ENCODE measurements at regions of chr20 and their contacts with region 1.

Region 1: DNA sequence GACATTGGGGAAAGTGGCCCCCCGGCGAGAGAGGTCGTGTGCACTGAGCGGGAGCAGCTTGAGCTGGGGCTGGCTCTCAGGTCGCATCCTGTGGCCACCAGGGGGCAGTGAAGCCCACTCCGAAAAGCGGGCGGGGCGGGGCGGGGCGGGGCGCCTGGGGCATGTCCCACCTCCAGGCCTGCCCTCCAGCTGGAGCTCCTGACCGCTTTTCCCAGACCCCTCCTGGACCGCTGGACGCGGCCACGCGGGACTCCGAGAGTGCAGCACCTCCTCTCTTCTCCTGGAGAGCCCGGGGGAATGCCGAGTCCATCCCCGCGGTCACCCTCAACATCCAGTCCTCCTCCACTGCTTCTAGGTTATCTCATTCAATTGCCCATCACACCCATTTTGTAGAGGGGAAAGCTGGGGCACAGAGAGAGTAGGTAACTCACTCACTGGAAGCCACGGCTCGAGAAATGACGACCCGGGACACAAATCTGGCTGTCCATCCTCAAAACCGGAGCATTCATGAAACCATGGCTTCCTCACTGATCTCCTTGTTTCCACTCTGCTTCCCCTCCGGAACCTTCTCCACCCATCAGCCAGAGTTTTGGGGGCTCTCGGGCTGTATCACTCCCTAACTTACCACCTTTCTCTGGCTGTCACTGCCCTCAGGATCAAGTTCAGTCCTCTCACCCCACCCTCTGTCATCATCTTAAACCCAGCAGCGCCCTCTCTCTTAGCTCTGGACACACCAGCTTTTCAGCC is 24.1 kb downstream of the COX4I2 start:
- DNase-seq: peak; percentile 70 to 81 (median 73)
- H3K4me3 ChIP-seq: peak overlapping the region in 1 of 2 donors; percentile 70
- H3K4me3 Mint-ChIP-seq: peak overlapping the region; percentile 83 to 93 (median 84)
- H3K27ac ChIP-seq: peak overlapping the region; percentile 59
- H3K27ac Mint-ChIP-seq: peak overlapping the region; percentile 57 to 95 (median 89)
- H3K4me1 ChIP-seq: peaks cover 31% of the 10 kb centered on the region
- H3K4me1 Mint-ChIP-seq: peaks cover 21 to 43% (median 29%) of the 10 kb centered on the region in 4 donors
- H3K27me3 ChIP-seq: no peaks in the 10 kb centered on the region
- H3K27me3 Mint-ChIP-seq: no peaks in the 10 kb centered on the region

Region 2: DNA sequence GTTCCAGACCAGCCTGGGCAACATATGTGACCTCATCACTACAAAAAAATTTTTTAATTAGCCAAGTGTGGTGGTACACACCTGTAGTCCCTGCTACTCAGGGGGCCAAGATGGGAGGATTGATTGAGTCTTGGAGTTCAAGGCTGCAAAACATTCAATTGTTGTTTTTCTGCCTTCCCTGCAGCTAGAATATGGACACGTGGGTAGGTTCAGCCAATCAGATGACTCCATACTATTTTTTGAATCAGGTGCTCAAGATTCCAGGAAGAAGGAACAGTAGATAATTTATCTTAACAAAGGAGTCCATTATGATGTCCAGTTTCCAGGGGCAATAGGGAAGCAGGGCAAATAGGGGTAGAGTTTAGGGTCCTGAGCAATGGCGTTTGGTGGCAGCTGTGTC is 269.0 kb before region 1 on chr20:
- CTCF ChIA-PET with region 1: no interaction called
- POLR2A ChIA-PET with region 1: no interaction called
- intact Hi-C with region 1: no loop called
- DNase-seq: no peak
- H3K4me3 ChIP-seq: no peak overlapping the region
- H3K4me3 Mint-ChIP-seq: no peak overlapping the region
- H3K27ac ChIP-seq: no peak overlapping the region
- H3K27ac Mint-ChIP-seq: no peak overlapping the region
- H3K4me1 ChIP-seq: no peaks in the 10 kb centered on the region
- H3K4me1 Mint-ChIP-seq: no peaks in the 10 kb centered on the region
- H3K27me3 ChIP-seq: no peaks in the 10 kb centered on the region
- H3K27me3 Mint-ChIP-seq: peaks cover 6 to 20% of the 10 kb centered on the region in 2 donors

Region 3: DNA sequence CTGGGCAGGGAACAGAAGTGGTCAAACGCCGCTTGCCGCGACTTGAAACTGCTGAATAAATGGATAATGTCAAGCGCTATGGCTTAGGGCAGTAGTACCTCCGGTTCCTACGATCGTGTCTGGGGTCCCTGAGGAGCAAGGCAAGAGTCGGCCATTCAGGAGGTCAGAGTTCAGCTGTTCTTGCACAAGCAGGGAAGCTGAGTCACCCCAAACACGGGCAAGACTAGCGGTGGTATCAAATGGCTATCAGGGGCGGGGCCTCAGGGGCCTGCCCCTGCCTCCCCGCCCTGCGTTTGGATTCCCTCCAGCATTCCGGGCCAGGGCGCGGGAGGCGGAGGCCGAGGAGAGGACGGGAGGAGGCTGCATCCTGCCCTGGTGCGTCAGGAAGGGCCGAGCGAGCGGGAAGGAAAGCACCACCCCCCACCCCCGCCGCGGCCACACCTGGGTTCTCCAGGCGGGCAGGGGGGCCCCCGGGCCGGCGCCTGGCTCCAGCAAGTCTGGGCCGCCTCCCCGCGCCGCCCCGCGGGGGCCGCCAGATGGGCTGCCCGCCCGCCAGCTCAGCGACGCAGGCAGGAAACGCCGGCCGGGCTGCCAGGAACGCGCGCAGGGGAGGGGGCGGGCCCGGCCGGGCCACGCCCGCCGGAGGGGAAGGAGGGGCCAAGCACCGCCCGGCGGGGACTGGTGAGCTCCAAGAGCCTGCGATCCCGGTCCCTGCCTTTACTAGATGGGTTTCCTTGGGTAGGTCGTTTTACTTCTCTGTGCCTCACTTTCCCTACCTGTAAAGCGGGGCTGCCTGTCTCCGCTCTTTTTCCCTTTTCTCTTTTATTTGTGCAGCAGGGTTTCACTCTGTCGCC is 88.9 kb before region 1 on chr20:
- CTCF ChIA-PET with region 1: interaction called, 12 read pairs
- POLR2A ChIA-PET with region 1: no interaction called
- intact Hi-C with region 1: no loop called
- DNase-seq: peak; percentile 73 to 85 (median 79)
- H3K4me3 ChIP-seq: peak overlapping the region; percentile 61 to 71
- H3K4me3 Mint-ChIP-seq: peak overlapping the region; percentile 87 to 95 (median 88)
- H3K27ac ChIP-seq: peak overlapping the region; percentile 71
- H3K27ac Mint-ChIP-seq: peak overlapping the region; percentile 86 to 96 (median 90)
- H3K4me1 ChIP-seq: peaks cover 14% of the 10 kb centered on the region
- H3K4me1 Mint-ChIP-seq: peaks cover 14 to 29% (median 19%) of the 10 kb centered on the region in 4 donors
- H3K27me3 ChIP-seq: no peaks in the 10 kb centered on the region
- H3K27me3 Mint-ChIP-seq: no peaks in the 10 kb centered on the region

Region 4: DNA sequence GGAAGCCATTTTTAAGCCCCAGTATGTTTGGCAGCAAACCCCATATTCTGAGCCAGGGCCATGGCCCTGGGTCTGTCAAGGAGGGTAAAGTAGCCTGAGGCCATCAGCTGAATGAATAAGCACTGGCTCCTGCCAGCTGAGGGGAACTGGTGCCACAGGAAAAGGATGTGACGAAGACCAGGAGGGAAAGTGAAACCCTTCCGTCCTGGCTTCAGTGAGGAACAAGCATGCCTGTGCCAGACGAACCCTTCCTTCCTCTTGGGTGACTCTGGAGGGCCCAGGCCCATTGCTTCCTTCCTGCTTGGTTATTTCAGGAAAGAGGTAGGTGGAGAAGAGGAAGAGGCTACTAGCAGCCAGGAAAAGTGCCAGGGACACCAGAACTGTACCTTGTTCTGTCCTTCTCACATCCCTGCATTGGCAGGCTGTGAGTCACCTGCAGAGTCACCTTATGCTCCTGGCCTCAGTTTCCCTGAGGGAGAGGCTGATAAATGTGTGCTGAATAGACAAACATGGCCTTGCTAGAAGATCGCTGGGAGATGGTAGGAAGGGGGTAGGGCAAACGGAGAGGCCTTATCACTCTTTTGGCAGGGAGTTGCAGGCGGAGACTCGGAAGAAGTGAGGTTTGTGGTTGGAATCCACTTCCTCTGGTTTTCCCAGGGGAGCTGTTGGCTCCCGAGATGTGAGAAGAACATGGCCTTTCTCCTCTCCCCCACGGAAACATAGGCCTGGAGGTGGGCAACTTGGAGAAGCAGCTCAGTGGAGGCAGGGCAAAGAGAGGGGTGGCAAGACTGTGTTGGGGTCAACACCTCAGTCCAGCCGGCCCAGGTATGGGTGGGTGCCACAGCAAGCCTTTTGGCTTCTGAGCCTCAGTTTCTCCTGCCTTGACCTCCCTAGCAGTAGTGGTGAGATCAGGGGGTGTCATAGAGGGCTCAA is 13.4 kb after region 1 on chr20:
- CTCF ChIA-PET with region 1: interaction called, 87 read pairs
- POLR2A ChIA-PET with region 1: interaction called, 22 read pairs
- intact Hi-C with region 1: loop called (anchors 1 kb)
- DNase-seq: peak; percentile 61 to 84 (median 63)
- H3K4me3 ChIP-seq: peak overlapping the region; percentile 59 to 87
- H3K4me3 Mint-ChIP-seq: peak overlapping the region; percentile 91 to 97 (median 94)
- H3K27ac ChIP-seq: peak overlapping the region; percentile 75
- H3K27ac Mint-ChIP-seq: peak overlapping the region; percentile 96 to 98 (median 97)
- H3K4me1 ChIP-seq: peaks cover 88% of the 10 kb centered on the region
- H3K4me1 Mint-ChIP-seq: peaks cover 59 to 82% (median 70%) of the 10 kb centered on the region in 4 donors
- H3K27me3 ChIP-seq: no peaks in the 10 kb centered on the region
- H3K27me3 Mint-ChIP-seq: no peaks in the 10 kb centered on the region

Region 5: DNA sequence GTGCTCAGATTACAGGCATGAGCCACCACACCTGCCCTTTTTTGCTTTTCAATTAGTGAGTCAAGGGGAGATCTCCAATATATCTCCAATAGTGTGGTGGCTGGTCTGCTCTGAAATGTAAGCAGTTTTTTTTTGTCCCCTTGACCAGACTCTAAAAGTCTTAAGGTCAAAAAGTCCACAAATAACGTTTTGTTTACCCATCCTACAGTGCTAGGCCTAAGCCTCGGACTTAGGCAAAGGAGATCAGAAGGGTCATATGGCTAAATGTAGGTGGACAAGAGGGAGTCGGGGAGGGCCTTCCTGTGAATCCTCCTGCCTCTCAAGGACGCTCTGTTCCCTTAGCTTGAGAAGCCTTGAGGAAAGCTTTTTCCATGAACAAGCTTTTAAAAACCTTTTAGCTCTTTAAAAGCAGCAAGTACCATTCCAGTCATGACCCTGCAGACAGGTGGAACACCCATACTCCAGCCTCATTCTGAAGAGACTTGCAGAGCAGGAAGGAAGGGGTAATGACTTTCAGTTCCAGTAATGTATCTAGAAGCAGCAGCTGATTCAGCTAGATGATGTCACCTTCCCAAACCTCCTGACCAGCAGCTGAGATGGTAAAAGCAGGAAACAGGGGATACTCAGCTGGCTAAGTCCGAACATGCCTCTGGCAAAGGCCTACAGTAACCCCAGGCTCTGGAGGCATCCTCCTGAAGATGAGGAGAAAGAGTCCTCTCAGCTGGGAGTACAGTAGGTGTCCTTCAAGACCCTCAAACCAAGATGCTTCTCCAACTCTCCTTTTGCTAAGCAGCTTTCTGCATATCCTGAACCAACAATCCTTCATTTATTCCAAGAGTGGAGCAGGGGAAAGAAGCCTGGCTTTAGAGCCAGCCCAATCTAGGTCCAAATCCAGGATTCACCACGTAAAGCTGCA is 37.3 kb after region 1 on chr20:
- CTCF ChIA-PET with region 1: interaction called, 23 read pairs
- POLR2A ChIA-PET with region 1: no interaction called
- intact Hi-C with region 1: no loop called
- DNase-seq: no peak
- H3K4me3 ChIP-seq: no peak overlapping the region
- H3K4me3 Mint-ChIP-seq: peak overlapping the region in 4 of 8 donors; percentile 11 to 71 (median 38)
- H3K27ac ChIP-seq: peak overlapping the region; percentile 6
- H3K27ac Mint-ChIP-seq: peak overlapping the region; percentile 66 to 84 (median 81)
- H3K4me1 ChIP-seq: peaks cover 58% of the 10 kb centered on the region
- H3K4me1 Mint-ChIP-seq: peaks cover 42 to 68% (median 53%) of the 10 kb centered on the region in 4 donors
- H3K27me3 ChIP-seq: no peaks in the 10 kb centered on the region
- H3K27me3 Mint-ChIP-seq: no peaks in the 10 kb centered on the region

Region 6: DNA sequence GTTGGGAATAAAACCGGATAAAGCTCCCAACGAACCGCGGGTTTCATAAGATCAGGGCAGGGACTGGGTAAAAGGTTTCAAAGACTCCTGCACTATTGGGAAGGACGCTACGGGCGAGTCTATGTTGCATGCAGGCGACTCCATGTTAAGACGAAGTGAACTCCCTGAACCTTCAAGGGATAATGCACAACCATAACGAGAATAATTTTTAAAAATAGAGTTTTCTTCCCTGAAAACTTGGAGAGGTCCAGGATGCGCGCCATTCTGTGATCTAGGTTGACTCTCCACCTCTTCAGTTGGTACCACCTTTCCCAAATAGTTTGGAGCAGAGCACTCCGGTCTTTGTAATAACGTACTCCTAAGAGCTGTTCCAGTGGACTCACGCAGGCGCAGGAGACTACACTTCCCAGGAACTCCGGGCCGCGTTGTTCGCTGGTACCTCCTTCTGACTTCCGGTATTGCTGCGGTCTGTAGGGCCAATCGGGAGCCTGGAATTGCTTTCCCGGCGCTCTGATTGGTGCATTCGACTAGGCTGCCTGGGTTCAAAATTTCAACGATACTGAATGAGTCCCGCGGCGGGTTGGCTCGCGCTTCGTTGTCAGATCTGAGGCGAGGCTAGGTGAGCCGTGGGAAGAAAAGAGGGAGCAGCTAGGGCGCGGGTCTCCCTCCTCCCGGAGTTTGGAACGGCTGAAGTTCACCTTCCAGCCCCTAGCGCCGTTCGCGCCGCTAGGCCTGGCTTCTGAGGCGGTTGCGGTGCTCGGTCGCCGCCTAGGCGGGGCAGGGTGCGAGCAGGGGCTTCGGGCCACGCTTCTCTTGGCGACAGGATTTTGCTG is 77.1 kb after region 1 on chr20 and contains the start of gene TPX2:
- CTCF ChIA-PET with region 1: interaction called, 9 read pairs
- POLR2A ChIA-PET with region 1: interaction called, 11 read pairs
- intact Hi-C with region 1: no loop called
- DNase-seq: peak; percentile 72 to 75 (median 73)
- H3K4me3 ChIP-seq: peak within 1 kb of the TSS; percentile 38 to 72
- H3K4me3 Mint-ChIP-seq: no peak within 1 kb of the TSS
- H3K27ac ChIP-seq: peak within 1 kb of the TSS; percentile 38
- H3K27ac Mint-ChIP-seq: no peak within 1 kb of the TSS
- H3K4me1 ChIP-seq: peaks cover 19% of the 10 kb centered on the region
- H3K4me1 Mint-ChIP-seq: peaks cover 0 to 4% (median 0%) of the 10 kb centered on the region in 4 donors
- H3K27me3 ChIP-seq: no peaks in the 10 kb centered on the region
- H3K27me3 Mint-ChIP-seq: no peaks in the 10 kb centered on the region
- total RNA-seq, gene TPX2: 0.30 to 0.44 TPM

Region 7: DNA sequence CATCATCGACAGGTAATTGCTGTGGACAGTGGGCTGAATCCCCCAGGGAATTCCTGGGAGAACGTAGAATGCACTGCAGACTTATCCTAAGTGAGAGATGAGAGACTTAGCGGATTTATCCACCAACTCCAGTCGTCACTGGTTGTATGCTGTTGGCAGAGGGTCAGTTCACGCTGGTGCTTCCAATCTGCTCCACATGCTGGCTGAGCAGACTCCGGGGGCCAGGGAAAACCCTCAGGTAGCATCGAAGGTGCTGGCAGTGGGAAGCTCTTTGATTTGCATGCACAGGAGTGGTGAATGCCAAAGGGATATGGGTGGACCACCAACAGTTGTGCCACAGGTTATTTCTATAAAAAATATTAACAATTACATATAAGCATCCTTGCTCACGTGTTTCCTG is 228.8 kb after region 1 on chr20:
- CTCF ChIA-PET with region 1: no interaction called
- POLR2A ChIA-PET with region 1: no interaction called
- intact Hi-C with region 1: no loop called
- DNase-seq: no peak
- H3K4me3 ChIP-seq: no peak overlapping the region
- H3K4me3 Mint-ChIP-seq: no peak overlapping the region
- H3K27ac ChIP-seq: no peak overlapping the region
- H3K27ac Mint-ChIP-seq: no peak overlapping the region
- H3K4me1 ChIP-seq: no peaks in the 10 kb centered on the region
- H3K4me1 Mint-ChIP-seq: no peaks in the 10 kb centered on the region
- H3K27me3 ChIP-seq: no peaks in the 10 kb centered on the region
- H3K27me3 Mint-ChIP-seq: peaks cover 3 to 7% of the 10 kb centered on the region in 2 donors

Measured in CD4-positive, alpha-beta memory T cell (primary cell).